ENCODE measurements at regions of chr16 and their contacts with region 1.

Region 1: DNA sequence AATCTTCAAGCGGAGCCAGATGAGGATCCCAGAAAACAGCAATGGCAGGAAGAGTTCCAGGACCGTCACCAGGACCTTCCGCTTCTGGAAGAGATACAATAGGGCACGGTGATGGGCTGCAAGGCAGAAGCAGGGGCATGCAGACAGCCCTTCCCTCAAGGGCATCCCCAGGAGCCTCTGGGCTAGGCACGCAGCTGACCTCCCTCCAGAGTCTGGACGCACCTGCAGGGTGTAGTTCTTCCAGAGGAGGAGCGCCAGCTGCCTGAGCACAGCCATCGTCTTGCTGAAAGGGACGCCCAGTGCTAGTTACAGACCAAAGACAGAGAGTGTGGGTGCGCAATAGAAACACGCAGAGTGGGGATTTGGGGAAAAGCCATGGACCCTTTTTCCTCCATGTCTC is 14.3 kb downstream of the ABCA3 start:
- DNase-seq: no peak
- H3K4me3 ChIP-seq: no peak overlapping the region
- H3K4me3 Mint-ChIP-seq: no peak overlapping the region
- H3K27ac Mint-ChIP-seq: no peak overlapping the region
- H3K4me1 ChIP-seq: no peaks in the 10 kb centered on the region
- H3K4me1 Mint-ChIP-seq: no peaks in the 10 kb centered on the region
- H3K27me3 ChIP-seq: no peaks in the 10 kb centered on the region
- H3K27me3 Mint-ChIP-seq: no peaks in the 10 kb centered on the region
- CTCF ChIP-seq: no peak

Region 2: GRCh38 chr16:2256531-2257140 is 69.6 kb before region 1 on chr16:
- CTCF ChIA-PET with region 1: no interaction called
- POLR2A ChIA-PET with region 1: no interaction called
- intact Hi-C with region 1: no loop called
- DNase-seq: no peak
- H3K4me3 ChIP-seq: no peak overlapping the region
- H3K4me3 Mint-ChIP-seq: no peak overlapping the region
- H3K27ac Mint-ChIP-seq: no peak overlapping the region
- H3K4me1 ChIP-seq: peaks cover 6% of the 10 kb centered on the region
- H3K4me1 Mint-ChIP-seq: peaks cover 7% of the 10 kb centered on the region
- H3K27me3 ChIP-seq: no peaks in the 10 kb centered on the region
- H3K27me3 Mint-ChIP-seq: no peaks in the 10 kb centered on the region
- CTCF ChIP-seq: no peak

Region 3: GRCh38 chr16:2308089-2308962 is 17.9 kb before region 1 on chr16:
- CTCF ChIA-PET with region 1: no interaction called
- POLR2A ChIA-PET with region 1: no interaction called
- intact Hi-C with region 1: no loop called
- DNase-seq: no peak
- H3K4me3 ChIP-seq: no peak overlapping the region
- H3K4me3 Mint-ChIP-seq: no peak overlapping the region
- H3K27ac Mint-ChIP-seq: no peak overlapping the region
- H3K4me1 ChIP-seq: no peaks in the 10 kb centered on the region
- H3K4me1 Mint-ChIP-seq: no peaks in the 10 kb centered on the region
- H3K27me3 ChIP-seq: no peaks in the 10 kb centered on the region
- H3K27me3 Mint-ChIP-seq: no peaks in the 10 kb centered on the region
- CTCF ChIP-seq: no peak

Region 4: DNA sequence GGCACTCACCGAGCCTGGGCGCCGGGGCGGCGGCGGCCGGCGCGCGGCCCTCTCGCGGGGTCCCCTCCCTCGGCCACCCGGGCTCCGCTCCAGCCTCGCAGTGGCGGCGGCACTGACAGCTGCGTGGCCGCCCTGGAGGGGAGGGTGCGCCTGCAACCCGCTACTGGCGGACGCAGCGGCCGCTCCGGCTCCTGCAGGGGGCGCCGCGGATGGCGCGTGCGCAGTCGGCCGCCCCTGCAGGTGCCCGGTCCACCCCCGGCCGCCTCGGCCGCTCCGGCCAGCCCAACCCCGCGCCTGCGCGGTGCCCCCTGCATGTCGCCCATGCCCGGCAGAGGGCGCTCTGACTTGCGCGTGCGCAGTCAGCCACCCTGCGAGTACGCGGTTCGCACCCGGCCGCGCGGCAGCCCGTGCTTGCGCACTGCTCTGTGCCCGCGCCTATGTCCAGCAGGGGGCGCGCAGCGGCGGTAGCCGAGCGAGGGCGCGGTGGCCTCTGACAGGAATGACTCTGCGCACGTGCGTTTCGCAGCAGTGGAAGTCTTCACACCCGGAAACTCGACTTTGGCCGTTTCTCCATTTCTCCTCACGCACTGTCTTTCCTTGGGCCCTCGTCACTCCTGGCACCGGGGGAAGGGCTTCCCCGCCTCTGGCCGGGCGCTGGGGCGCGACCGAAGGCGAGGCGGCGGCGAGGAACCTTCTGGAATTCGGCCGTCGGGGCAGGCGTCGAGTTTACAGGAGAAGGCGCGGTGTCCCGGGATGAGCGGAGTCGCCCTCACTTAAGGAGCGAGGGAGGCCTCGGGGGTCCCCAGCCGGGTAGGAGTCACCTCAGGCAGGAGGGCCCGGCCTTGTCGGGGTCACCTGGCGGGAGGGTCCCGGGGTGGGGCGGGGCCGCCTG is 14.6 kb after region 1 on chr16 and contains the start of gene ABCA3:
- CTCF ChIA-PET with region 1: no interaction called
- POLR2A ChIA-PET with region 1: no interaction called
- intact Hi-C with region 1: loop called (anchors 1 kb)
- DNase-seq: peak; percentile 91 to 99
- H3K4me3 ChIP-seq: peak within 1 kb of the TSS; percentile 83
- H3K4me3 Mint-ChIP-seq: peak within 1 kb of the TSS; percentile 91
- H3K27ac Mint-ChIP-seq: peak within 1 kb of the TSS; percentile 86
- H3K4me1 ChIP-seq: 0 out of 2 replicates have a peak, but pooled peaks cover 3% of the 10 kb centered on the region
- H3K4me1 Mint-ChIP-seq: no peaks in the 10 kb centered on the region
- H3K27me3 ChIP-seq: no peaks in the 10 kb centered on the region
- H3K27me3 Mint-ChIP-seq: peaks cover 3% of the 10 kb centered on the region
- CTCF ChIP-seq: peak; percentile 89 to 99
- total RNA-seq, gene ABCA3: 14.6 and 16.1 TPM in 2 replicates